Naive thymus-derived CD4-positive, alpha-beta T cell (primary cell): ENCODE measurements at regions of chr1 and their contacts with region 1.

Region 1: DNA sequence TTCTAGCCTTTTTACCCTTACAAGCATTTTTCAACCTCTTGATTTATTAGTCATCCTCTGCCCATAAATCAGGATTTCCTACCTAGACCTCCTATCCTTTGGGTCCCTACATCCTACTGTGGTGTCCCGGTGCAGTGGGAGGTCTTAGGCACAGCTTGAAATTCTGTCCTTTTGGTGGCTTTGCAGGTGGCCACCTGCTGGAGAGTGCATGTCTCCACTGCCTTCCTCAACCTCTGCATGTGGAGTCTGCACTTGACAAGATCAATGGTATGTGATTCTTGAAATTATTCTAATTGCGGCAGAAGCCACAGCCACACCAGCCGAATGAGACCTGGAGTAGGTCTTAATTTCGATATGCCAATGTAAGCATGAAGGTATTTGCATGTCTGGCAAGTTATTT is 11.4 kb upstream of the KCNA3 start:
- DNase-seq: peak in 7 of 9 donors; percentile 15 to 47 (median 28)
- ATAC-seq: peak; percentile 62
- H3K4me3 ChIP-seq: no peak overlapping the region
- H3K4me3 Mint-ChIP-seq: no peak overlapping the region
- H3K27ac ChIP-seq: no peak overlapping the region
- H3K27ac Mint-ChIP-seq: peak overlapping the region in 4 of 9 donors; percentile 2 to 60 (median 44)
- H3K4me1 ChIP-seq: no peaks in the 10 kb centered on the region
- H3K4me1 Mint-ChIP-seq: peaks cover 0 to 11% (median 5%) of the 10 kb centered on the region in 7 donors
- H3K27me3 ChIP-seq: no peaks in the 10 kb centered on the region
- H3K27me3 Mint-ChIP-seq: peaks cover 0 to 13% (median 0%) of the 10 kb centered on the region in 5 donors

Region 2: GRCh38 chr1:109947582-109948286 is 738.5 kb before region 1 on chr1:
- CTCF ChIA-PET with region 1: no interaction called
- POLR2A ChIA-PET with region 1: no interaction called
- intact Hi-C with region 1: no loop called
- DNase-seq: no peak
- ATAC-seq: no peak
- H3K4me3 ChIP-seq: no peak overlapping the region
- H3K4me3 Mint-ChIP-seq: no peak overlapping the region
- H3K27ac ChIP-seq: no peak overlapping the region
- H3K27ac Mint-ChIP-seq: no peak overlapping the region
- H3K4me1 ChIP-seq: peaks cover 0 to 5% of the 10 kb centered on the region in 2 donors
- H3K4me1 Mint-ChIP-seq: peaks cover 5 to 13% (median 6%) of the 10 kb centered on the region in 7 donors
- H3K27me3 ChIP-seq: no peaks in the 10 kb centered on the region
- H3K27me3 Mint-ChIP-seq: peaks cover 0 to 12% (median 4%) of the 10 kb centered on the region in 5 donors

Region 3: DNA sequence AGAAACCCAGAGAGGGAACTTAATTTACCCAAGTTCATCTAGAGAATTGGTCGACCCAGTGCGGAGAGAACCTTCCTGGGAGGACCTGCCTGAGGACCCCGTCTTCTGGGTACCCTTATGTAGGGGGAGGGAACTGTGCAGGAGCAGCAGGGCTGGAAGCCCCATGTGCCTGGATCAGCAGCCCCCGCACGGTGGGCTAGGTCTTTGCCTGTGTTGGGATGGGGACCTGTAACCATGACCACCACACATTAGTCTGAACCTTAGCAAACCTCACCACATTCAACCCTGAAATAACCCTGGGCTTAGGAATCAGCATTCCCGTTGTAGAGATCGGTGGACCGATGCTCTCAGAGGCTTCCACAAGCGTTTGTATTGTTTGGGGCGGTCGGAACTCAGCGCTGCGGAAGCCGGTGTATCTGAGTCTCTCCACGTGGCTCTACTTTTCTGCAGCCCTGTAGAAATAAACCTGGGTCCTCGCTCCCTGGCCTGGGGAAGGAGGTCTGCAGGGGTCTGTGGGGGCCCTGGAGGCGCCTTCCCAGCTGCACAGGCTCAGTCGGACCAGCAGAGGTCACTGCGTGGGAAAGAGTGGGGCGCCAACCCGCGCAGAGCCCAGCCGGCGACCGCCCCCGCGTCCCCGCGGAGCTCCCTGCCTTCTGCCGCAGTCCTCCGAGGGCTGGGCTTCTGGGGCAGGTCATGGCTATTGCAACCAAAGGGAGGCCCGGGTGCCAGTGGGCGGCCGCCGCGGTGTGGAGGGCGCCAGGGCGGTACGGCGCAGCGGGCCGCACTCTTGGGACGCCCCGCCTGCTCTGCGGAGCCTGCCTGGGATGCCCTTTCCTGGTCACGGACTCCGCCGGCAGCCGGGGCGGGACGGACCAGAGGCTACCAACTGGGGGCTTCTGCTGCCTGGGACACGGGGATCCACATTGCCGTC is 131.1 kb before region 1 on chr1:
- CTCF ChIA-PET with region 1: no interaction called
- POLR2A ChIA-PET with region 1: no interaction called
- intact Hi-C with region 1: loop called in 1 of 2 experiments (anchors 5 kb)
- DNase-seq: peak; percentile 20 to 71 (median 54)
- ATAC-seq: peak; percentile 89
- H3K4me3 ChIP-seq: peak overlapping the region; percentile 25
- H3K4me3 Mint-ChIP-seq: peak overlapping the region in 9 of 10 donors; percentile 13 to 63 (median 31)
- H3K27ac ChIP-seq: no peak overlapping the region
- H3K27ac Mint-ChIP-seq: no peak overlapping the region
- H3K4me1 ChIP-seq: no peaks in the 10 kb centered on the region
- H3K4me1 Mint-ChIP-seq: peaks cover 0 to 8% (median 0%) of the 10 kb centered on the region in 7 donors
- H3K27me3 ChIP-seq: peaks cover 0 to 9% of the 10 kb centered on the region in 2 donors
- H3K27me3 Mint-ChIP-seq: peaks cover 47 to 72% (median 60%) of the 10 kb centered on the region in 5 donors

Region 4: GRCh38 chr1:110746579-110747160 is 60.5 kb after region 1 on chr1:
- CTCF ChIA-PET with region 1: no interaction called
- POLR2A ChIA-PET with region 1: no interaction called
- intact Hi-C with region 1: no loop called
- DNase-seq: peak; percentile 14 to 62 (median 44)
- ATAC-seq: peak; percentile 46
- H3K4me3 ChIP-seq: no peak overlapping the region
- H3K4me3 Mint-ChIP-seq: no peak overlapping the region
- H3K27ac ChIP-seq: no peak overlapping the region
- H3K27ac Mint-ChIP-seq: no peak overlapping the region
- H3K4me1 ChIP-seq: no peaks in the 10 kb centered on the region
- H3K4me1 Mint-ChIP-seq: no peaks in the 10 kb centered on the region
- H3K27me3 ChIP-seq: no peaks in the 10 kb centered on the region
- H3K27me3 Mint-ChIP-seq: peaks cover 25 to 49% (median 30%) of the 10 kb centered on the region in 5 donors

Region 5: DNA sequence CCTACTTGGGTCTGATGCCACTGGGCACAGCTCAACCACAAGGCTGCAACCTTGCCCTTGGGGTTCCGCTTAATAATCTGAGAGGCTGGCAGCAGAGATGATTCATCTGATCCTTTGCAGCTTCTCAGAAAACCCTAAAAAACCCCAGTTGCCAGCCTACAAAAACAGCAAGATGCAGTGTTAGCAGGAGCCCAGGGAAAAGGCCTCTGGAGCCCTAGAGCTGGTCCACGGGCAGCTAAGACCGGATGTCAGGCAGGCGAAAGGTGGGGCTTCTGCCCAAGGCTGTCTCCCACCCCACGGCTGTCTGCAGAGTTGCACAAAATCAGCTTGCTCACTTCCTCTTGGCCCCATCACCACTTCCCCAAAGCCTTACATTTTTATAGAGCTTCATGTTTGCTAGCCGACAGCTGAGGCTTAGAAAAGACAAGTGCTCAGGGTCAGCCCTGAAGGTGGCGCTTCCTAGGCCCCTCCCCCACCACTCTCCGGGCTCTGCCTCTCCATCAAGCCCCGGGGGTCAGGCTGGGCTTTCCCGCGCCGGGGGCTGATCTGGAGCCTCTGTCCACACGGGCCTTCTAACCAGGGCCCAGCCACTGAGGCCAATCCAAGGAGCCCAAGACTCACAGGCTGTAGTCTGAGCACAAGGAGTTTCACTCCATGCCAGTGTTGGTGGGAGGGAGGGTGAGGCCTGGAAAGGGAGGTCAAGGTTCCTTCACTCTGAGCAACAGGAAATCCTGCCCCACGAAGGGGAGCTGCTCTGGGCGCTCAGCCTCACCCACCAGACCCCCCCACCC is 821.4 kb after region 1 on chr1:
- CTCF ChIA-PET with region 1: no interaction called
- POLR2A ChIA-PET with region 1: no interaction called
- intact Hi-C with region 1: no loop called
- DNase-seq: peak; percentile 35 to 62 (median 40)
- ATAC-seq: peak; percentile 76
- H3K4me3 ChIP-seq: peak overlapping the region; percentile 53
- H3K4me3 Mint-ChIP-seq: peak overlapping the region; percentile 72 to 86 (median 82)
- H3K27ac ChIP-seq: peak overlapping the region; percentile 74
- H3K27ac Mint-ChIP-seq: peak overlapping the region in 8 of 9 donors; percentile 88 to 97 (median 94)
- H3K4me1 ChIP-seq: peaks cover 64 to 83% of the 10 kb centered on the region in 2 donors
- H3K4me1 Mint-ChIP-seq: peaks cover 42 to 65% (median 60%) of the 10 kb centered on the region in 7 donors
- H3K27me3 ChIP-seq: no peaks in the 10 kb centered on the region
- H3K27me3 Mint-ChIP-seq: no peaks in the 10 kb centered on the region